H1 (cell line): ENCODE measurements at regions of chr15 and their contacts with region 1.

Region 1: GRCh38 chr15:99076552-99077308 is 28.1 kb upstream of the SYNM start:
- DNase-seq: peak in 1 of 2 experiments; percentile 38
- H3K4me3 ChIP-seq: peak overlapping the region in 1 of 4 experiments; percentile 39; a peak in 1 of 8 replicates
- H3K27ac ChIP-seq: no peak overlapping the region
- H3K4me1 ChIP-seq: peaks cover 0 to 7% (median 1%) of the 10 kb centered on the region in 4 experiments; a peak in 1 of 7 replicates
- H3K27me3 ChIP-seq: no peaks in the 10 kb centered on the region
- CTCF ChIP-seq: peak; percentile 22 to 92 (median 83)
- EP300 ChIP-seq: no peak
- POLR2A ChIP-seq: no peak
- RAD21 ChIP-seq: peak; percentile 97 to 98

Region 2: DNA sequence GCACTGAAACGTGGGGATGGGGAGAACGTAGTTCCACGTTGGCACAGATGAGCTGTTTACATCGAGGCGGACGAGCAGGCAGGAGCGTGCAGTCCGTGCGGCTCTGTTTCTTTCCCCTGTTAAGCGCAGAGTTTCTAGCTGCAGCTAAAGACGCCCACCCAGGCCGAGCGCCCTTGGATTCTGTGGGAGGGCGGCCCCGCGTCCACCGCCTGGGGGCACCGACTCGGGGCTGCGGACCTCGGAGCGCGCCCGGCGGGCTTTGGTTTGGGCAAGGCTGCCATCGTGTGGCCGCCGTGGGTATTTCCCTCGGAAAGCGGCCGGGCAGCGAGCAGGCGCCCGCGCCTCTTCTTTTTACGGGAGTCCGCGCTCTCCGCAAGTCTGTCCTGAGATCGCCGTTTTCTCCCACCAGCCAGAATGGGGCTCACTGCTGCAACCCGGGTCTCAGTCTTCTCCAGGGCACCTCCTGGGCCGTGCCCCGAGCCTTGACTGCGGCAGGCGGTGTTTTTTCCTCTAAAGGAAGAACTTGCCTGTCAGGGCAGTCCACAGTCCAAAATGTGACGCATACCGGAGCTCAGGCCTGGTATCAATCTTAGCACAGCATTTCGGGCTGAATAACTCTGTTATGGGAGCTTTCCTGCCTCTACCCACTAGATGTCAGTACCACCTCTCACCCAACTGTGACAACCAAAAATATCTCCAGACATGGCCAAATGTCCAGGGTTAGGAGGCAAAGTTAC is 648.3 kb before region 1 on chr15:
- CTCF ChIA-PET with region 1: interaction called, 10 read pairs
- POLR2A ChIA-PET with region 1: no interaction called
- DNase-seq: peak; percentile 49 to 97
- H3K4me3 ChIP-seq: peak overlapping the region; percentile 11 to 54 (median 24); a peak in 5 of 8 replicates
- H3K27ac ChIP-seq: no peak overlapping the region
- H3K4me1 ChIP-seq: peaks cover 0 to 2% (median under 1%) of the 10 kb centered on the region in 4 experiments; a peak in 2 of 7 replicates
- H3K27me3 ChIP-seq: peaks cover 3 to 26% (median 18%) of the 10 kb centered on the region in 4 experiments
- CTCF ChIP-seq: peak; percentile 63 to 90 (median 66)
- EP300 ChIP-seq: no peak
- POLR2A ChIP-seq: no peak
- RAD21 ChIP-seq: peak; percentile 72 to 87

Region 3: DNA sequence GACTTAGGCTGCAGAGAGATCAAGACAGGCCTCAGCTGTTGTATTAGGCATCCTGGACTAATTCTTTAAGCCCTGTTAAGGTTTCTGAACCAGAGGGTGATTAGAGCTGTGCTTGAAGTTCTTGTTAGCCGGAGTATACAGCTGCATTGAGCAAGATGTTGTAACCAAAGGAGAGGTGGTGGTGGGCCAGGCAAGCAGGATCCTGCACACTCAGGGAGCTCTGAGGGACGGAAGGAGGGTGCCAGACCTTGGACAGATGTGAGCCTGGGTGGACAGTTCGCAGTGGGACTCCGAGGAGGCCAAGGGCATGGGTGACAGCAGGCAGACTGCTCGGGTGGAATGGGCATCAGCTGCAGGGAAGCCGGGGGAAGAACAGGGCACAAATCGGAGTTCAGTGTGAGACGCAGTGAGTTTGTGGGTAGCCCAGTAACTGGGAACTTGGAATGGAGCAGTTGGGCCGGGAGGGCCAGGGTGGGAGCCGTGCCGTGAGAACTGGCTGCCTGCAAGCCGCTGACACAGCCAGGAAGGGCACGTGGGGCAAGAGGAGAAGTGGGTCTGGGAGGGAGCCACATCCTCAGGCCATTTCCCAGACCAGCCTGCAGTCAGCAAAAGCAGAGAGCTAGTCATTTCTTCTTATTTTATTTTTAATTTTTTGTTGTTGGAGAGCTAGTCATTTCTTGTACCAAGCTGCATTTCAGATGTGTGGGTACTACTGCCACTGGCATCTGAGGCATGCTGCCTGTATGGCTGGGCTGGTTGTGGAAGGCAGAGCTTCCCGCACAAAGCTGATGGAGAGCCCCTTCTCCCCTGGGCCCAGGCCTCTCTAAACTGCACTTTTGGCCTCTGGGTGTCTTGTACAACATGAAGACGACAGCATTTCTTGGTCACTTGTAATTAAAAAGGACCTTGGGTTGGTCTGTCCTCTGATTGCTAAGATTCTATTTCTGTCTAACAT is 130.2 kb before region 1 on chr15:
- CTCF ChIA-PET with region 1: interaction called, 10 read pairs
- POLR2A ChIA-PET with region 1: no interaction called
- DNase-seq: no peak
- H3K4me3 ChIP-seq: no peak overlapping the region
- H3K27ac ChIP-seq: no peak overlapping the region
- H3K4me1 ChIP-seq: no peaks in the 10 kb centered on the region; a peak in 1 of 7 replicates
- H3K27me3 ChIP-seq: no peaks in the 10 kb centered on the region
- CTCF ChIP-seq: no peak
- EP300 ChIP-seq: no peak
- POLR2A ChIP-seq: no peak
- RAD21 ChIP-seq: no peak

Region 4: DNA sequence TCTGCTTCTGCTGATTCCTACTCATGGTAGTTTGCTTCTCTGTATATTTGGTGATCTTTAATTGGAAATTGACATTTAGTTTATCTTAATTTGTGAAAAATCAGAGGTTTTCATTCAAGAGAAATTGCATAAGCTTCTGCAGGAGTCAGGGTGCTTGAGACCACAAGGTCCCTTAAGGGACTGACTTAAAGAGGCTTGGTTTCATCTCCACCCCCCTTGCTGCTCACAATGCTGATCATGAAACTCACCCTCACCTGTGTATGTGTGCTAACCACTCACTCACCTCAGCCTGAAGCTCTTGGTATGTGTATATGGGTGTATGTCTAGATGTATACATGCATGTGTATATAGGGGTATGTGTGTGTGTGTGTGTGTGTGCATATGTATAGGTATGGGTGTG is 80.6 kb before region 1 on chr15:
- CTCF ChIA-PET with region 1: interaction called, 11 read pairs
- POLR2A ChIA-PET with region 1: no interaction called
- DNase-seq: no peak
- H3K4me3 ChIP-seq: no peak overlapping the region
- H3K27ac ChIP-seq: no peak overlapping the region
- H3K4me1 ChIP-seq: no peaks in the 10 kb centered on the region; a peak in 1 of 7 replicates
- H3K27me3 ChIP-seq: no peaks in the 10 kb centered on the region
- CTCF ChIP-seq: no peak
- EP300 ChIP-seq: no peak
- POLR2A ChIP-seq: no peak
- RAD21 ChIP-seq: no peak

Region 5: GRCh38 chr15:99052205-99052604 is 24.5 kb before region 1 on chr15:
- CTCF ChIA-PET with region 1: interaction called, 78 read pairs
- POLR2A ChIA-PET with region 1: no interaction called
- DNase-seq: no peak
- H3K4me3 ChIP-seq: no peak overlapping the region
- H3K27ac ChIP-seq: no peak overlapping the region
- H3K4me1 ChIP-seq: no peaks in the 10 kb centered on the region; a peak in 2 of 7 replicates
- H3K27me3 ChIP-seq: no peaks in the 10 kb centered on the region
- CTCF ChIP-seq: no peak
- EP300 ChIP-seq: no peak
- POLR2A ChIP-seq: no peak
- RAD21 ChIP-seq: no peak

Region 6: DNA sequence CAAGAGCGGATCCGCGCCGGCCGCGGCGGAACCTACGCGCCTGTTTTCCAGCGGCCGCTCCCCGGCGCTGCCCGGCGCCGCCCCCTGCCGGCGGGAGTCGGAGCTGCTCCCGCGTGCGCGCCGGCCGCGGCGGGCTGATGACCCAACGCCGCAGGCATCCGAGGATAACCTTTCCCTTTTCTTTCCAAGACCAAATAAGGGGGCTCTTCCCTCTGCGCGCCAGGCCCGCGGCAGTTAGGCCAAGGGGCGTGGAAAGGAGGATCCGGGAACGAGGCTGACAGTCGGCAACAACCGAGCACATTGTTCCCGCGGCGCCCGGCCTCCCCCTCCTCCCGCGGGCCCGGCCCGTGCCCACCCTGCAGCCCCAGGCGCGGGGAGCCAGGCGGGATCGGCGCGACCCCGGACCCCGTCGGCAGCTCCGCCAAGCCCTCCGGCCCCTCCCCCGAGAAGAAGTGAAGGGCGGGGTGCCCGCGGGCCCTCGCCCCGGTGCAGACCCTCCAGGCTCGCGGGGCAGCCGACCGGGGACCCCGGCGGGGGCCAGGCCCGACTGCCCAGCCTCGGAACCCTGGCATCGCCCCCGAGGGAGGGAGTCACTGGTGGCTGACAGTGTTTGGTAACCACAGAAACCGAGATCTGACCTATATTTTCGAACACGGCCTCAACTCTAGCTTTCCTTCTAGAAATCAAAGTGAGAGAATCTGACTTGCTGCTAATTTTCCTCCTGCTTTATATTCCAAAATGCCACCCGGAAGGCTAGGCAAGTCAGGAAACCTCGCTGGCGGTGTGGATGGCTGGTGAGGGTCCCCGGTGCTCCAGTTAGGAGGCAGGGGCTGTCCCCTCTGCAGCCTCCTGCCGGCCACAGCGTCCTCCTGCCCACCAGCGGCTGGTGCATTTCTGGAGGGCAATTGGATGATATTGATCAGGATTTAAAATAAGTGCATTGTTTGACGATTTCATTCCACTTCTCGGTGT is 17.4 kb before region 1 on chr15:
- CTCF ChIA-PET with region 1: interaction called, 78 read pairs
- POLR2A ChIA-PET with region 1: interaction called, 3 read pairs
- DNase-seq: peak; percentile 70 to 86
- H3K4me3 ChIP-seq: peak overlapping the region; percentile 41 to 70 (median 50)
- H3K27ac ChIP-seq: peak overlapping the region; percentile 43; the same call in 1 of the 2 replicates
- H3K4me1 ChIP-seq: peaks cover 0 to 5% (median 0%) of the 10 kb centered on the region in 4 experiments; a peak in 3 of 7 replicates
- H3K27me3 ChIP-seq: 0 out of 7 replicates have a peak, but pooled peaks cover 0 to 9% (median under 1%) of the 10 kb centered on the region in 4 experiments
- CTCF ChIP-seq: peak; percentile 76 to 86 (median 83)
- EP300 ChIP-seq: peak in 1 of 2 experiments; percentile 24; a peak in 1 of 3 replicates
- POLR2A ChIP-seq: peak in 1 of 2 experiments; percentile 71; a peak in 2 of 3 replicates
- RAD21 ChIP-seq: peak; percentile 38 to 77; a peak in 3 of 4 replicates

Region 7: DNA sequence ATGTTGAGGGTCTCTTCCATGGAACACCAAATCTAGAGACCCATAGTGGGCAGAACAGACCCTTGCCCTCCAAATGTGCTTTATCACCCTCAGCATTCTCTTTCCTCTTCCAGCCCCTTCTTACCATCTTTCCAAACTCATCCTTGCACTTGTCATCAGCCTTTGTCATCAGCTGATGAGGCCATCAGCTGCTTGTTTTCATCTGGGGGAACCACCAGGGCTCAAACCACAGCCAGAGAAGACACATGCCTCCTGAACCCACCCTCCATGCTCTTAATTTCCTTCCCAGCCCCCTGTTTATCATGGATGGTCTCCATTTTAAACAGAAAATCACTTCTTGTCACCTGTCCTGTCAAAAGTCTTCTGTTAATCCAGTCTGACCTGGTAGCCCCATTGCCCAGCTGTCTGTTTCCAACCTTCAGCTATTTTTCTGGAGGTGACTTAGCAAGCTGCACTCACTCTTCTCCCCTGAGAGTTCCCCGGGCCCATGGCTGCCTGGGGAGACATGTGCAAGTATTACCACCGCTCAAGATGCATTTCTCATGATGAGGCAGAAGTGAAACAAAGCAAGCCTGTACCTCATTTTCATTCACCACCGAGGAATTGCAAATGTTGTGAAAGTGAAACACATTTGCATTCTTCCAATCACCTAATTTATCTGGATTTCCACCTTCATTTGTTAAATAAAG is 13.4 kb after region 1 on chr15:
- CTCF ChIA-PET with region 1: interaction called, 19 read pairs
- POLR2A ChIA-PET with region 1: no interaction called
- DNase-seq: no peak
- H3K4me3 ChIP-seq: 0 out of 8 replicates have a peak overlapping the region, but pooled peaks of 1 of the 4 experiments have one; percentile 8
- H3K27ac ChIP-seq: no peak overlapping the region; the same call in 1 of the 2 replicates
- H3K4me1 ChIP-seq: peaks cover 0 to 5% (median 3%) of the 10 kb centered on the region in 4 experiments; a peak in 4 of 7 replicates
- H3K27me3 ChIP-seq: no peaks in the 10 kb centered on the region
- CTCF ChIP-seq: no peak
- EP300 ChIP-seq: no peak
- POLR2A ChIP-seq: no peak
- RAD21 ChIP-seq: no peak